ENCODE measurements at regions of chr13 and their contacts with region 1.

Region 1: GRCh38 chr13:52980695-52981094 is 47.9 kb upstream of the OLFM4 start:
- DNase-seq: no peak
- ATAC-seq: no peak
- H3K4me3 ChIP-seq: no peak overlapping the region
- H3K27ac ChIP-seq: no peak overlapping the region
- H3K4me1 ChIP-seq: no peaks in the 10 kb centered on the region
- CTCF ChIP-seq: no peak
- EP300 ChIP-seq: no peak
- POLR2A ChIP-seq: no peak
- RAD21 ChIP-seq: no peak

Region 2: GRCh38 chr13:52786747-52787146 is 193.9 kb before region 1 on chr13:
- CTCF ChIA-PET with region 1: no interaction called
- POLR2A ChIA-PET with region 1: no interaction called
- DNase-seq: no peak
- ATAC-seq: no peak
- H3K4me3 ChIP-seq: no peak overlapping the region
- H3K27ac ChIP-seq: no peak overlapping the region
- H3K4me1 ChIP-seq: no peaks in the 10 kb centered on the region
- CTCF ChIP-seq: no peak
- EP300 ChIP-seq: no peak
- POLR2A ChIP-seq: no peak
- RAD21 ChIP-seq: no peak

Region 3: DNA sequence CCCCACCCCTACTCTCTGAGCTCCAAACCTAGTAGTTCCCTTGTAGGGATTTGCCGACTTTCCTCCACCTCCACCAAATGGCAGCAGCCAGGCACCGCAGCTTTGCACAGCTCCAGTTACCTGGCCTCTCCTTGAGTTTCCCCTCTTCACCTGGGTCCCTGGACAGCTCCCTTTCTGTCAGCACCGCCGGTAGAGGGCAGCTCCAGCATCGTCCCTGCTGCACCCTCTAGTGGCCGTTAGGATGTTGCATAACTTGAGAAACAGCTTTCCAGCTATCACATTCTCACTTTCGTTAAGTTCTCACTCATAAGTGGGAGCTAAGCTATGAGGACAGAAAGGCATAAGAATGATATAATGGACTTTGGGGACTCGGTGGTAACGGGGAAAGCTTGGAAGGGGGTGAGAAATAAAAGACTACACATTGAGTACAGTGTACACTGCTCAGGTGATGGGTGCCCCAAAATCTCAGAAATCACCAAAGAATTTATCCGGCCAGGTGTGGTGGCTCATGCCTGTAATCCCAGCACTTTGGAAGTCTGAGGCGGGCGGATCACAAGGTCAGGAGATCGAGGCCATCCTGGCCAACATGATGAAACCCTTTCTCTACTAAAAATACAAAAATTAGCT is 12.5 kb before region 1 on chr13:
- CTCF ChIA-PET with region 1: interaction called, 19 read pairs
- POLR2A ChIA-PET with region 1: no interaction called
- DNase-seq: peak; percentile 44 to 66
- ATAC-seq: peak; percentile 97 to 98
- H3K4me3 ChIP-seq: no peak overlapping the region
- H3K27ac ChIP-seq: no peak overlapping the region
- H3K4me1 ChIP-seq: no peaks in the 10 kb centered on the region
- CTCF ChIP-seq: peak; percentile 89
- EP300 ChIP-seq: no peak
- POLR2A ChIP-seq: no peak
- RAD21 ChIP-seq: peak; percentile 62 to 66

Region 4: GRCh38 chr13:52999093-52999696 is 18.5 kb after region 1 on chr13:
- CTCF ChIA-PET with region 1: no interaction called
- POLR2A ChIA-PET with region 1: no interaction called
- DNase-seq: no peak
- ATAC-seq: no peak
- H3K4me3 ChIP-seq: no peak overlapping the region
- H3K27ac ChIP-seq: no peak overlapping the region
- H3K4me1 ChIP-seq: no peaks in the 10 kb centered on the region
- CTCF ChIP-seq: no peak
- EP300 ChIP-seq: no peak
- POLR2A ChIP-seq: no peak
- RAD21 ChIP-seq: no peak

Region 5: DNA sequence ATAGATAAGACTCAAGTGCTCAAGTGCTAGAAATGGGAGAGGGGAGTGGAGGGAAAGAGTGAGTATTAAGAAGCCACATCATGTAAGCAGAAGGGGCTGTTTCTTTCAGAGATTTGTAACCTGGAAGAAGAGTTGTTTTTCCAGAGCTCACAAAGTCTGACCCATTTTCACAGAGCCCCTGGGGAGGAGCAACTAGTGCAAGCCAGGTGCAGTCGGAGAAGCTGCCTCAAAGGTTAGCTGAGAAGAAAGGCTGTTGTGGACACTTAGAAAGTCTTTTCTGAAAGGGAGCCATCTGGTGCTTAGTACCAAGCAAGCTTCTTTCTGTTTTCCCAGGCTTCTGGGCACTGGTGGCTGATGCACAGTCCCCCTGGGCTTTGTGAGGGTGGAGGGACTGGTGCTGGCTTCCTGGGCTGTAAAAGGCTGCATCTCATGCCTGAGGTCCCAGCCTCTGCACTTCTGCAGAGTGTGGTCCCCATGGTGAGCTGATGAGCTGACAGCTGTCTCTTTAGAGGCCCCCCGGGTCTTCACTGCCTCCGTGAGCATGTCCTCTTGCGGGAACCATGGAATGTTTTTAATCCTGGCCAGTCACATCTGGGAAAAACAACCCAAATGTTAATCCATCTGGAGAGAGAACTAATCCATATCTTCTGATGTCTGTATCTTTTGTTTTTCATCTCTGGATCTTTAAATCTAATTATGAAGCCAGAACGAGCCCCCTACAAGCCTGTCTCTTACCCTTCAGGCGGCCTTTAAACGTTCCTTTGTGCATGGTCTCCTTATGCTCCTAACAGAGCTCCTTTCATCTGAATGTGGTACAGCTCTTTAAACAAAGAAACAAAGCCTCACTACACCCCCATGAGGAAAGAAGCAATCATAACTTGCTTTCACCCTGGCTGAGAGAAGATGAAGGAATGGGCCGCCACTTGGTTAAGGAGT is 88.2 kb after region 1 on chr13:
- CTCF ChIA-PET with region 1: no interaction called
- POLR2A ChIA-PET with region 1: no interaction called
- DNase-seq: no peak
- ATAC-seq: no peak
- H3K4me3 ChIP-seq: no peak overlapping the region
- H3K27ac ChIP-seq: no peak overlapping the region
- H3K4me1 ChIP-seq: no peaks in the 10 kb centered on the region
- CTCF ChIP-seq: no peak
- EP300 ChIP-seq: no peak
- POLR2A ChIP-seq: no peak
- RAD21 ChIP-seq: no peak

Region 6: GRCh38 chr13:53368948-53369347 is 388.3 kb after region 1 on chr13:
- CTCF ChIA-PET with region 1: no interaction called
- POLR2A ChIA-PET with region 1: no interaction called
- DNase-seq: no peak
- ATAC-seq: no peak
- H3K4me3 ChIP-seq: no peak overlapping the region
- H3K27ac ChIP-seq: no peak overlapping the region
- H3K4me1 ChIP-seq: no peaks in the 10 kb centered on the region
- CTCF ChIP-seq: no peak
- EP300 ChIP-seq: no peak
- POLR2A ChIP-seq: no peak
- RAD21 ChIP-seq: no peak

Measured in A549 (cell line).